ENCODE measurements at regions of chr17 and their contacts with region 1.

Region 1: GRCh38 chr17:45332989-45333701 is 16.3 kb upstream of the MAP3K14 start:
- DNase-seq: no peak
- H3K4me3 Mint-ChIP-seq: no peak overlapping the region
- H3K27ac Mint-ChIP-seq: no peak overlapping the region
- H3K4me1 Mint-ChIP-seq: peaks cover 22% of the 10 kb centered on the region
- H3K27me3 Mint-ChIP-seq: no peaks in the 10 kb centered on the region

Region 2: DNA sequence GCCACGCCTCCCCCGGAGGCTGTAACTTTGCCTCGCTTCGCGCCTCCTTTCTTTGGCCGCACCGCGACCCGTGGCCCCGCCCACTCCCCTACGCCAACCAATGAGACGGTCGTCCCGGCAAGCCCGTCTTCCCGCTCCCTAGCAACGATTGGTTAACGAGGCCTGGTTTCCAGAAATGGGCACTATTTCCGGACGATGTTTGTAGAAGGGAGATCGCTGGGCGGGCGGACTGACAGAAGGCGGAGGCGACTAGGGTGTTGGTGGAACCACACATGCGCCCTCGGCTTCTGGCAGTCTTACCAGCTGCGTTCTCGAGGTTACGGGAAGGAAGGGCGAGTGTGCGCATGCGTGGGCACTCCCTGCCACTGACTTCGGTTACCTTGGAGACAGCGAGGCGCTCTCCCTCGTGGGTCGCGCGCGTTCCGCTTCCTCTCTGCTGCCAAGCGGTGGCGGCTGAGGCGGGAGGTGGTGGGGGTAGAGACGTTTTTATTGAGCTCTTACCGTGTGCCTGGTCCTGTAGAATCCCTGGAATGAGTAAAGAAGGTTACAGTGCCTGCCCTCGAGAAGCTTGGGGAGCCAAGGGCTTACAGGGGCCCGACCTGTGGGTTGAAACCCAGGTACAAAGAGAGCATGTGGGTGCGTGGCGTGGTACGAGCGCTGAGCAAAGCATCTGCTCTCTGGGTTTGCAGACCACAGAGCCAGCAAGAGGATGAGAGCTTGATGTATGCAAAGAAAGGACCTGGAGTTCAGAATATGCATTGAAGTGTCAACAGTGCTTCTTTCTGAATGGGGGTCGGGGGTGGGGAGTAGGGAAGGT is 15.8 kb before region 1 on chr17:
- CTCF ChIA-PET with region 1: interaction called, 13 read pairs
- POLR2A ChIA-PET with region 1: no interaction called
- DNase-seq: peak; percentile 100
- H3K4me3 Mint-ChIP-seq: peak overlapping the region; percentile 81
- H3K27ac Mint-ChIP-seq: peak overlapping the region; percentile 90
- H3K4me1 Mint-ChIP-seq: peaks cover 73% of the 10 kb centered on the region
- H3K27me3 Mint-ChIP-seq: no peaks in the 10 kb centered on the region